ENCODE measurements at regions of chr19 and their contacts with region 1.

Region 1: DNA sequence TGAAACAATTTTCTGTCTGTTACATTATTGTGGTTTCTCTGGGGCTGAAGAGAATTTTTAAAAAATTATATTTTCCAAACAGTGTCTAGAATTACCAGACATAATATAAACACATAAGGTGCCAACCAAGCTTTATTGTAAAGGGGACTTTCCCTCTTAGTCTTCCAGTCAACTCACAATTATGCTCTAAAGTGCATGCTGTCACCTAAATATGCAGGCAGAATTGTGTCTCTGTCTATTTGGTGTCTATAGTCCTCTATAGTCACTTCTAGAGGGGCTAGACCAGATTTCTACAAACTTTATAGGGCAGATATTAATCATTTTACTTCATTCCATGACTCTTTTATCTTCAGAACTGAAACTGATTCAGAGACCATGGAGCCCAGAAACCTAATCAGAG is 12.8 kb downstream of the ZNF254 start:
- DNase-seq: no peak
- H3K4me3 ChIP-seq: no peak overlapping the region
- H3K27ac ChIP-seq: no peak overlapping the region
- H3K4me1 ChIP-seq: no peaks in the 10 kb centered on the region
- H3K27me3 ChIP-seq: no peaks in the 10 kb centered on the region
- CTCF ChIP-seq: no peak

Region 2: DNA sequence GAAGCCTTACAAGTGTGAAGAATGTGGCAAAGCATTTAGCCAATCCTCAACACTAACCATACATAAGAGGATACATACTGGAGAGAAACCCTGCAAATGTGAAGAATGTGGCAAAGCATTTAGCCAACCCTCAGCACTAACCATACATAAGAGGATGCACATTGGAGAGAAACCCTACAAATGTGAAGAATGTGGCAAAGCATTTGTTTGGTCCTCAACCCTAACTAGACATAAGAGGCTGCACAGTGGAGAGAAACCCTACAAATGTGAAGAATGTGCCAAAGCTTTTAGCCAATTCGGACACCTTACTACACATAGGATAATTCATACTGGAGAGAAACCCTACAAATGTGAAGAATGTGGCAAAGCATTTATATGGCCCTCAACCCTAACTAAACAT is 167.0 kb before region 1 on chr19:
- CTCF ChIA-PET with region 1: no interaction called
- POLR2A ChIA-PET with region 1: no interaction called
- intact Hi-C with region 1: no loop called
- DNase-seq: no peak
- H3K4me3 ChIP-seq: no peak overlapping the region
- H3K27ac ChIP-seq: no peak overlapping the region
- H3K4me1 ChIP-seq: no peaks in the 10 kb centered on the region
- H3K27me3 ChIP-seq: no peaks in the 10 kb centered on the region
- CTCF ChIP-seq: no peak

Region 3: DNA sequence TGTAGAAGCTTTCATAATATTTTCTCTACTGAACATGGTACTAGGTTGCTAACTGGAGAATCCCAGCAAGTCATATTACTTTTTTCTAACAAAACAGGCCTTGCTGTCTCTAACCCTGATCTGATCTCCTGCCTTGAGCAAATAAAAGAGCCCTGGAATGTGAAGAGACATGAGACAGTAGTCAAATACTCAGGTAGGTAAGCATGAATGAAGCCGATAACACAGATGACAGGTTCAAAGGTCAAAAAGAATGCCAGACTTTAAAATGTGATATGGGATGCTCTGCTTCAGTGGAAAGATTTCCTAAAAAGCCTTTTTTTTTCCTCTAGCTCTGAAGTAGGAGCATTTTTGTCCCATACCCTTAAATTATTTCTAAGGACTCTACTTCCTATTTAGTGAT is 156.4 kb before region 1 on chr19:
- CTCF ChIA-PET with region 1: no interaction called
- POLR2A ChIA-PET with region 1: interaction called, 13 read pairs
- intact Hi-C with region 1: no loop called
- DNase-seq: no peak
- H3K4me3 ChIP-seq: no peak overlapping the region
- H3K27ac ChIP-seq: no peak overlapping the region
- H3K4me1 ChIP-seq: no peaks in the 10 kb centered on the region
- H3K27me3 ChIP-seq: no peaks in the 10 kb centered on the region
- CTCF ChIP-seq: no peak

Region 4: GRCh38 chr19:24141612-24142011 is 41.8 kb after region 1 on chr19:
- CTCF ChIA-PET with region 1: no interaction called
- POLR2A ChIA-PET with region 1: no interaction called
- intact Hi-C with region 1: no loop called
- DNase-seq: no peak
- H3K4me3 ChIP-seq: no peak overlapping the region
- H3K27ac ChIP-seq: no peak overlapping the region
- H3K4me1 ChIP-seq: no peaks in the 10 kb centered on the region
- H3K27me3 ChIP-seq: no peaks in the 10 kb centered on the region
- CTCF ChIP-seq: no peak

Measured in PC-9 (cell line).